ENCODE measurements at regions of chr9 and their contacts with region 1.

Region 1: DNA sequence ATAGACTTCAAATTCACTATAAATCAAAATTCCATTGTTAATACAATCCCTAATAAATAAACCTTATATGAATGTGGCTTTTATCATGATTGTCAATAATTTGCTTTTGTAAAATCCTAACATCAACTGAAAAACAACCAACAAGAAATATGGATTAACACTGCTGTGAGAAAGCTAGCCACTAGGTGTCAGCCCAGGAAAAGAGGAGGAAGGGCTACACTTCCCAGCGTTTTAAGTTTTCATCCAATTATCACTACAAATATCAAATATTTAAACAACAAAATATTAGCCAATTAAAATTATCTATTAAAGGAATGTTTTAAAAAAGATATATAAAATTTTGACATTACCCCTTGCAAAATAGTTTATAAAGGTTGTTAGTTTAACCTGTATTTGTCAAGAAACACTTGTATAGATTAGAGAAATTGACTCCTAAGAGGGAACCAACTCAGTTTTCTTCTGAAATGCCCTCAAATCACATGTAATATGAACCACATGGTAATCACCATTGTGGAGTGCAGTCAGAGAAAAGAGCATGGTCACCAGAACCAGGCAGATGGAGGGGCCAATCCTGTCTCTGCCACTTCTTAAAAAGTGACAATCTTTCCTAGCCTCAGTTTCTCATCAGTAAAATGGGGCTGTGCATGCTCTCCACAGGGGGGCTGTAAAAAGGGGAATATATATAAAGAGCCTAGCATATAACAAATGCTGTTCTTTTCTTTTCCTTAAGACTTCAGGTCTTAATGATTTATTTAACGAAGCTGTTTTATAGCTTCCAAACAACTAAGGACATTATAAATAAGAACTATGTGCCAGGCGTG is 188.2 kb downstream of the CRB2 start:
- DNase-seq: peak in 1 of 10 donors; percentile 20
- H3K4me3 ChIP-seq: no peak overlapping the region
- H3K27ac ChIP-seq: no peak overlapping the region
- H3K27me3 ChIP-seq: no peaks in the 10 kb centered on the region
- CTCF ChIP-seq: peak; percentile 67 to 96 (median 84)

Region 2: GRCh38 chr9:123401879-123402513 is 142.2 kb before region 1 on chr9:
- intact Hi-C with region 1: loop called in 1 of 2 experiments (anchors 10 kb)
- DNase-seq: peak in 3 of 10 donors; percentile 29 to 65 (median 56)
- H3K4me3 ChIP-seq: no peak overlapping the region
- H3K27ac ChIP-seq: peak overlapping the region in 1 of 59 donors; percentile 7
- H3K27me3 ChIP-seq: no peaks in the 10 kb centered on the region
- CTCF ChIP-seq: peak; percentile 50 to 87 (median 76)

Region 3: DNA sequence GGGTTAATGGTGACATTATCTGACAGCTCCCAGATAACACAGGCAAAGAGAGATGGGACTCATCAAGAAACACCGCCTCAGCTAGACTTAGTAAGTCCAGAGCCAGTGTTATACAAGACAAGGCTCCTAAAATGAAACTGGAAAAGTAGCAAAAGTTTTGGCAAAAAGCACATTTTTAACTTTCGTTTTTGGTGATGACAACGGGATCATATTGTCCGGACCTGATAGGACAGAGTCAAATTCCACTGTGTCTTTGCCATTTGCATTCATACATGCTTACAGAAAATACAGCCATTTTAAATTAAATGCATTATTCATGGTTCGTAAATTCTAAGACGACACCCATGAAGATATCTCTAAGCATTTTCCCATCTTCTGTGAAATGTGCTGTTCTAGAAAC is 36.2 kb before region 1 on chr9:
- intact Hi-C with region 1: no loop called
- DNase-seq: no peak
- H3K4me3 ChIP-seq: no peak overlapping the region
- H3K27ac ChIP-seq: no peak overlapping the region
- H3K27me3 ChIP-seq: no peaks in the 10 kb centered on the region
- CTCF ChIP-seq: no peak

Region 4: DNA sequence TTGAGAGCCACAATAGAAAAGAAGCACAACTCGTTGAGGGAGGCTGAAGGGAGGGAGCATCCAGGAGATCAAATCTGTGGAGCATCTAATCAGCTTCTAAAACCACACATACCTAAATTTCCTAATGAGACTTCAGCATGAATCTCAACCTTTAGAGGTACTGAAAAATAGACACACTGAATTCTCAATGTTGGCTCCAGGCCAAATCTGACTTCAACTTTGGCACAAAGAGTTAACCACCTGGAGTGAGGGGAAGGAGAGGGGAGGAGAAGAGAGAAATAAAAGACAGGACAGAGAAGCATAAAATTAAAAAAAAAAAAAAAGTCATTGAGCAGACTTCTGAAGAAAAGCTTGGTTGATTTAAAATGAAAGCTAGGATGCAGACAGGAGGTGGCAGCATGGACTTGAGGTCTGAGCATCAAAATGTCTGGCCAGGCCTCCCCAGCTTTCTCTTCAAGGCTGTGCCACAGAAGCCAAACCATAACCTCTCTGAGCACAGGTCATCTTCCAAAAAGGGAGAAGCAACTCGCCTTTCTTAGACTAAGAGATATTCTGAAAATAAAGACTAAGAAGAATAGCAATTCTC is 180.1 kb after region 1 on chr9:
- intact Hi-C with region 1: loop called in 1 of 2 experiments (anchors 10 kb)
- DNase-seq: peak in 5 of 10 donors; percentile 10 to 53 (median 41)
- H3K4me3 ChIP-seq: no peak overlapping the region
- H3K27ac ChIP-seq: peak overlapping the region in 19 of 59 donors; percentile 1 to 69 (median 27)
- H3K27me3 ChIP-seq: no peaks in the 10 kb centered on the region
- CTCF ChIP-seq: peak in 49 of 56 donors; percentile 20 to 70 (median 45)

Region 5: DNA sequence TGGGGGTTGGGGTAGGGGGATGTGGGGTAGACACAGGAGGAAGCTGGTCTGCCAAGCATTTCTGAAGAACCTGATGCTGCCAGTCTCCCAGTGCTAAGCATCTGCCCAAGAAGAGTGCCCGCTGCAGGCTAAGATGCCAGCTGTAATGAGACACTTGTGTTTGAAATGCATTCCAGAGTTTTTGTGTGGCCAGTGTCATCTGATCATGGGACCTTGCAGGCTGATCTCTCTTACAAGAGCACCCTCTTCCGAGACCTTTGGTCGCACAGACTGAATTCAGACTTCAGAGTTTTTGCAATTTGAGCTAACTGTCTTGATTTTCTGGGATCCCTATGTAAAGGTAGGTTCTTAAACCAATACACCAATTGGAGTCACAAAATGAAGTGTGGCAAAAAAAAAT is 327.6 kb after region 1 on chr9:
- intact Hi-C with region 1: loop called in 1 of 2 experiments (anchors 10 kb)
- DNase-seq: peak in 6 of 10 donors; percentile 19 to 53 (median 40)
- H3K4me3 ChIP-seq: no peak overlapping the region
- H3K27ac ChIP-seq: peak overlapping the region in 3 of 59 donors; percentile 2 to 15 (median 11)
- H3K27me3 ChIP-seq: no peaks in the 10 kb centered on the region
- CTCF ChIP-seq: peak in 46 of 56 donors; percentile 11 to 58 (median 31)

Region 6: DNA sequence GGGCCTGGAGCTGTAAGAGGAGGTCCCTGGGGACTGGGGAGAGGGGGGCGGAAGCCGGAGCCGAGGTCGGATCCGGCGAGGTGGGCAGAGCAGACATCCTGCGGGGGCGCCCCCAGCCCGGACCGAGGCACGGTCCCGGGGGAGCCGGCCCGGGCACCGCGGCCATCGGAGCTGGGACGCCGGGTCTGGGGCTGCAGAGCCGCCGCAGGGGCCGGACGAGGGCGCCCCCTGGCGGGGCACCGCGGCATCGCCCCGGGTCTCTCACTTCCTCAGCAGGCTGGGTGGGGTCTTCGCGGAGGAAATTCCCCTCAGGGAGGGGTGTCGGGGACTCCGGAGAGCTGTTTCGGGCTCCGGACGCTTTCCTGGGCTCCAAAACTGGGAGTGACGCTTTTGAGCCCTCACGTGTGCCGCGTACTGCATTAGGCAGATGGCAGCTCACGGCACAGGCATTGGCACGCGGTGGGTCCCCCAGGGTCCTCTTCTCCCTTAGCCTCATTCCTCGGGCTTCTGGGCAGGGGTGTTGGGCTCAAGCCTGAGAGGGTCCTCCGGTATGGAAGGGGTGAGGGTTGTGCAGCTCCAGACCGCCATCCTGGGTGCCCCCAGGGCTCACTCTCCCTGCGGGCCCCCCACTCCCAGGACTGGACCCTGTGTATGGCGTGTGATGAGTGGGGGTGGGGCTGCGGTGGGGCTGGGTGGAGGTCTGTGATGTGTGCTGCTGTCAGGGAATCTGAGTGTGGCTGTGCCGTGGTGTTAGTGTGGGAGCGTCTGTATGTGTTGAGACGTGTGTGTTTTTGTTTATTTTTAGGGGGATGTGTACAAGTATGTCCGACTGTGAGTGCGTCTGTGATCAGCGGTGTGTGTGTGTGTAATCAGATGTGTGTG is 497.0 kb after region 1 on chr9:
- intact Hi-C with region 1: loop called (anchors 5 kb)
- DNase-seq: peak in 2 of 10 donors; percentile 58 to 74
- H3K4me3 ChIP-seq: peak overlapping the region; percentile 9 to 70 (median 51)
- H3K27ac ChIP-seq: peak overlapping the region in 2 of 59 donors; percentile 56 to 67
- H3K27me3 ChIP-seq: peaks cover 0 to 50% (median 5%) of the 10 kb centered on the region in 45 donors
- CTCF ChIP-seq: peak; percentile 61 to 99 (median 94)